Lower lobe of right lung (tissue), 2 donors: ENCODE measurements at regions of chr1 and their contacts with region 1.

Region 1: DNA sequence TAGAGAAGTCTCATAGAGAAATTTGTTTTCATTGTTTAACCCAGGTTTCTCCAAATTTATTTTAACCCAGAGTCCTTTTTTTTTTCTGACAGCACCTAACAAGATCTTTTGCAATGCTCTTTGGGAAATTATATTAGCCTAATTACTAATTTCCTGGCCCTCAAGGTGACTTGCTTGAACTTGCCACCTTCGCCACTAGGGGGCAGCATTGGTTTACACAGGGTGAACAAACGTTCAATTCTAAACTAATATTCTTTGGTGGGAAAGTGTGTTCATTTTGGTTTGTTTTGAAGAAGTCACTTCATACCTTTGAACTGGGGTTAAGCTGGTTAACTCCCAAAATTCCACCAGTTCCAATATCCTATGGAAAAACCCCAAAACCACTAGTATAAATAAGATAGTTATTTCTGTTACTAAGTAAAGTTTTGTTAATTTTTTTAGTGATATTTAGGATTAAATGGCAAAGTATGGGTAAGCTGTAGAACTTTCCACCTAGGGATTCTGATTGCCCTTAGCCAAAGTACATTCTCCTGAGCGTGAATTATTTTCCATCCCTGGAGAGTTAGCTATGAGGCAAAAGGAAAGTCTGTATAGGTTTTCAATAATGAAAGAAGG is 13.0 kb downstream of the CCDC190 start:
- DNase-seq: peak; percentile 78
- ATAC-seq: peak; percentile 54 to 60
- H3K4me3 ChIP-seq: no peak overlapping the region
- H3K27ac ChIP-seq: no peak overlapping the region
- H3K4me1 ChIP-seq: no peaks in the 10 kb centered on the region
- H3K27me3 ChIP-seq: no peaks in the 10 kb centered on the region
- CTCF ChIP-seq: peak; percentile 89

Region 2: GRCh38 chr1:162997499-162998285 is 149.7 kb after region 1 on chr1:
- intact Hi-C with region 1: no loop called
- DNase-seq: no peak
- ATAC-seq: no peak
- H3K4me3 ChIP-seq: no peak overlapping the region
- H3K27ac ChIP-seq: no peak overlapping the region
- H3K4me1 ChIP-seq: no peaks in the 10 kb centered on the region
- H3K27me3 ChIP-seq: no peaks in the 10 kb centered on the region
- CTCF ChIP-seq: no peak

Region 3: DNA sequence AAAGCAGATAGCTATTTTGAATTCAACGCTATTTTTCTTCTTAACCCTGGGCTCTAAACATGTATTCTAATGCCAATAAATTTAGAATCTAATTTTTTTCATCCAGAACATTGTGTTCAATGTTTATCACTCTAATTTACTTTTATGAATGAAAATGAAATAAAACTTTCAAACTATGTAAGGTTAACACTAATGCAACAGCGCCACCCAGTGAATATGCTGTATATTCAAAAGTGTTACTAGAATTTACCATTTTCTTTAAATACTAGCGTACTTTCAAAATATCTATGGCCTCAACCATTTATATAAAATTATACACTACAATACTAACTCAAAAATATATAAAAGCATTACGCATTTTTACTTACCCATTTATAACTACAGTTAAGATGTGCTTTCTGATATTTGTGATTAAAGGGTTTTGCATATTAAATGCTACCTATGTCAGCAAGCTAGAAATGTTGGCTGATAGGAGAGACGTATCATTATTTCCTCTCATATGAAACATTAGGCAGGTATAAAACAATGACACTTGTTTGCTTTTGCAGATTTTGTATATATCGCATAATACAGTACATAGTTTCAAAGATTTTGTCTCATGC is 467.9 kb after region 1 on chr1:
- intact Hi-C with region 1: loop called (anchors 10 kb)
- DNase-seq: no peak
- ATAC-seq: no peak
- H3K4me3 ChIP-seq: no peak overlapping the region
- H3K27ac ChIP-seq: no peak overlapping the region
- H3K4me1 ChIP-seq: peaks cover 4% of the 10 kb centered on the region
- H3K27me3 ChIP-seq: no peaks in the 10 kb centered on the region
- CTCF ChIP-seq: peak; percentile 64